ENCODE measurements at regions of chr11 and their contacts with region 1.

Region 1: DNA sequence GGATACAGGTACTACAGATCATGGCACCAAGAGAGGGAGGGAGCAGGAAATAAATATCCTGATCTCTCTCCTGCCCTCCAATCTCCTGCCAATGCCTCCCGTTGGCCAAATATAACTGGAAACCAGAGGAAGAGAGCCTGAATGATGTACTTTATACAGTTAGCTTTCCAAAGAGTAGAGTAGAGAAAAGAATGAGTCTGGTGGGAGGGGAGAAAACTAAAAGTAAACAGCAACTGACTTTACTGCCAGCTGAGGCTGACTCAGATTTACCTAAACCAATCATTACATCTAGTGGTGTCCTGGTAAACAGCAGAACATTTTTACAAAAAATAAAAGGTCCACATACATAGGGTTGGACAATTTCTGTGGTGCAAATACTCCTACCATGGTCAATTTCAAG is 5.1 kb downstream of the MPZL3 start:
- DNase-seq: no peak
- H3K4me3 Mint-ChIP-seq: peak overlapping the region; percentile 3
- H3K27ac Mint-ChIP-seq: peak overlapping the region; percentile 81
- H3K4me1 Mint-ChIP-seq: peaks cover 78% of the 10 kb centered on the region
- H3K27me3 Mint-ChIP-seq: no peaks in the 10 kb centered on the region

Region 2: DNA sequence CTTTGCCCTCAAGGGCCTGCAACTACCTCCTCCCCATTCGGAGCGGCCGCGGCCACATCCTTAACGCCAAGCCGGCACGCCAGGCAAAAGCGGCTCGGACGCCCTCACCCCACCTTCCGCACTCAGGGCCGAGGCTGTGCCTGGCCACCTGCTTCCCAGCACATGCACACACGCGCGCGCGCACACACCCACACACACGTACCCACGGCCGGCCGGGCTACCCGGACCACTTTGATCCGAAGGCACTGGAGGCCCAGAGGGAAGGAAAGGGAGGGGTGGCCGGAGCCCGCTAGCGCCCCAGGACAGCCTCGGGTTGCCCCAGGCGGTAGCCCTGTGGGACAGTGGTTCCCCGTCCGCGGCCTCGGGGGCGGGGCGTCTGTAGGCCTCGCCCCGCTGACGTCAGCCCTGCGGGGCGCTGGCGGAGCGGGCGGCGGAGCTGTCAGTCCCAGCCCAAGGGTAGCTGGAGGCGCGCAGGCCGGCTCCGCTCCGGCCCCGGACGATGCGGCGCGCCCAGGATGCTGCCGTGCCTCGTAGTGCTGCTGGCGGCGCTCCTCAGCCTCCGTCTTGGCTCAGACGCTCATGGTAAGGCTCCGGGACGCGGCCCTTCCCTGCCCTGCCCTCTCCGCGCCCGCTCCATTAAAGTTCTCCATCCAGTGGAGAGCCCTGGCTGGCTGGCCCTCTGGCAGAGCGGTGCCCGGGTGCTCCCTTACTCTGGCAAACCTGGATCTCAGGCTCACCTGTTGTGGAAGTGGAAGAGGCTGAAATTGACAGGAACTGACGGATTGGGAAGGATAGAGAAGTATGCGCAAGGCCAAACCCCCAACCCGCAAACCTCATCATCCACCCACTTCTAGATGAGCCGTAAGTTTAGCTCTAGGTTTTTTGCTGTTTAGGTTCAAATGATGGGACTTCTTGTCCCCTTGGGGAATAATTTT is 260.8 kb before region 1 on chr11 and contains the start of gene IL10RA:
- CTCF ChIA-PET with region 1: no interaction called
- POLR2A ChIA-PET with region 1: no interaction called
- DNase-seq: peak; percentile 90
- H3K4me3 Mint-ChIP-seq: peak within 1 kb of the TSS; percentile 89
- H3K27ac Mint-ChIP-seq: peak within 1 kb of the TSS; percentile 85
- H3K4me1 Mint-ChIP-seq: peaks cover 61% of the 10 kb centered on the region
- H3K27me3 Mint-ChIP-seq: no peaks in the 10 kb centered on the region
- total RNA-seq, gene IL10RA: 286 to 291 TPM

Region 3: GRCh38 chr11:118216621-118217481 is 30.2 kb before region 1 on chr11:
- CTCF ChIA-PET with region 1: interaction called, 4 read pairs
- POLR2A ChIA-PET with region 1: interaction called, 96 read pairs
- DNase-seq: peak; percentile 57
- H3K4me3 Mint-ChIP-seq: peak overlapping the region; percentile 74
- H3K27ac Mint-ChIP-seq: peak overlapping the region; percentile 94
- H3K4me1 Mint-ChIP-seq: peaks cover 96% of the 10 kb centered on the region
- H3K27me3 Mint-ChIP-seq: no peaks in the 10 kb centered on the region

Region 4: GRCh38 chr11:118319337-118319707 is 72.3 kb after region 1 on chr11:
- CTCF ChIA-PET with region 1: no interaction called
- POLR2A ChIA-PET with region 1: no interaction called
- DNase-seq: no peak
- H3K4me3 Mint-ChIP-seq: no peak overlapping the region
- H3K27ac Mint-ChIP-seq: peak overlapping the region; percentile 36
- H3K4me1 Mint-ChIP-seq: peaks cover 69% of the 10 kb centered on the region
- H3K27me3 Mint-ChIP-seq: no peaks in the 10 kb centered on the region